ENCODE measurements at regions of chr22 and their contacts with region 1.

Region 1: DNA sequence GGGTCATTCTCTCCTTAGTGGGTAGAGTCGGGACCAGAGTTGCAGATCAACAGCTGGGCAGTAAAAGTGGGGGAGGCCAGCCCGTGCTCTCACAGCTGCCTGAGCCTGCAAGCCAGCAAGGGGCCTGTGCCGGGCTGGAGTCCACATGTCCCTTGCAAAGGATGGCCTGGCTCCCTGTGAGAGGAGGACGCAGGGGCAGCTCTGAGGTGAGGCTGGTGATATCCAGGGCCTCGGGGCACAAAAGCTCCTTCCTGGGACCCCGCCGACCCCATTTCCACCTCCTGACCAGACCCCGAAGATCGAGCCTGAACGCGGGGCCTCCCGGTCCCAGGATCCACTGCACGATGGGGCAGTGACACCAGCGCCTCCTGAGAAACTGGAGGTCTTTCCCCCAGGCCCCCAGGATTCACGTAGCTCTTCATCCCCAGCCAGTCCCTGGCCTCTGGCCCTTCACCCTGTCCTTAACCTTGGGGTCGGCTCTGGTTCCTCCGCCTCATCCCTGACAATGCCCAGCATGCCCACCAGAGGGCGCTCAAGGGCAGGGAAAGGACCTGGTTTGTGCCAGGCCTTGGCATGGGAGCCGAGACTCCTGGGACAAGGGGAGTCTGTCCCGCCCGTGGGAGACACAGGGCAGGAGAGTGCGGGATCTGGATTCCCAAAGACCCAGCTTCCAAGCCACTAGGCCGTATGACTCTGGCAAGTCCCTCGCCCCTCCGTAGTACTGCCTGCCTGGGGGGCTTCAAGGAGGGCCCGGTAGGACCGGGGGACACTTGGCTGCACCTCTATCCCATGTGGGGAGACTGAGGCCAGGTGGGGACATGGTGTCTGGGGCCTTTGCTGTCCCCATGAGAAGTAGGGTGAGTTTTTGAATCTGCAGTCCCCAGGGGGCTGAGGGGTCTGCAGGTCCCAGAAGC is 17.8 kb upstream of the WNT7B start:
- DNase-seq: peak; percentile 55
- H3K4me3 ChIP-seq: no peak overlapping the region
- H3K27ac ChIP-seq: no peak overlapping the region
- H3K4me1 ChIP-seq: peaks cover 31% of the 10 kb centered on the region
- H3K27me3 ChIP-seq: no peaks in the 10 kb centered on the region
- CTCF ChIP-seq: peak; percentile 91 to 95
- POLR2A ChIP-seq: no peak

Region 2: DNA sequence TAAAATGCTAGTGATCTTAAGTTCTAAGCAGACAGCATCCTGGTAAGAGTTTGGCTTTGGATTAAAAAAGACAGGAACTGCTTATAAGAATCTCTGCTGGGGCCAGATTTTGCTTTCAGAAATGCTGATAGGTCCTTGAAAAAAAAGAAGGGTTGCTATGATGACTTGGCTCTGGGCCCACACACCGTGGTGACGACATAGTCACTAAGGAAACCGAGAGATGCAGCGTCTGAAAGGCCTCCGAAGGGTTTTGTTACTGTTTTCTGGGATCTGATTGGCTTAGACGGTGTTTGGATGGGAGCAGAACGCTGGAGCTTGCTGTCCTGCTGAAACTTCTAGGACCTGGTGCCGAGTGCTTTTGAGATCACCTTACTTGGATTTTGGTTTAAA is 676.6 kb before region 1 on chr22:
- CTCF ChIA-PET with region 1: no interaction called
- POLR2A ChIA-PET with region 1: no interaction called
- dilution Hi-C with region 1: no loop called
- intact Hi-C with region 1: loop called (anchors 5 kb)
- DNase-seq: peak; percentile 97
- H3K4me3 ChIP-seq: peak overlapping the region in 1 of 3 experiments; percentile 44
- H3K27ac ChIP-seq: peak overlapping the region; percentile 99
- H3K4me1 ChIP-seq: peaks cover 33% of the 10 kb centered on the region
- H3K27me3 ChIP-seq: no peaks in the 10 kb centered on the region
- CTCF ChIP-seq: no peak
- POLR2A ChIP-seq: no peak

Region 3: DNA sequence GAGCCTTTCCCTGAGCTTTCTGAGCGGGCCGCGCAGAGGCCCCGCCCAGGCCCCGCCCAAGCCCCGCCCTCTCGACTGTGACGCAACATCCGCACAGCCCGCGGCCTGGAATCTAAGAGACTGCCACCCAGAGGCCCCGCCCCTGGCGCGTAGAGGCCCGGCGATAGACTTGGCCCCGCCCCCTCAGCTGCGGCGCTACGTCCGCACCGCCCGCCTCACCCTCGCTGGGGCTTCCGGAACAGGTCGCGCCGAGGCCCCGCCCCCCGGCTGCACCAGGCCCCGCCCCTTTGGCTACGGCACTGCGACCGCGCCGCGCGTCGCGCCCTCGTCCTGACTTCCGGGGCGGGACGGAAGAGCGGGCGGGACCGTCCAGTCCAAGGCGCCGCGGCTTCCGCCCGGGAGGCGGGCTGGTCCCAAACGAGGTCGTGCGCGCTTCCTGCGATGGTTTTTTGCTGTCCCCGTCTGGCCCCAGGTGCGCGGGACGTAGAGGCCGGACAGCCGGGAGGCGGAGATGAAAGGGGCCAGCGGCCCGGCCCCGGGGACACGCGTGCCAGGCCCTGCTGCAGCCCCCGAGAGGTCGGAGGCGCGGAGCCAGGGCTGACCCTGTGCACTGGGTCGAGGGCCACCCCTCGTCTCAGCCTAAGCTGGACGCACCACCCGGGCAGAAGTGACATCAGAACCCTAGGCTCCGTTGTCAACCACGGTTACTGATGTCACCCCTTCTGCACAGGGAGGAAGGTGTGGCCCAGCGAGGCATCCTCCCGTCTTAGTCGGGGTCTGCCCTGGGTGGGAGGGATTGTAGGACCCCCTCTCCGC is 41.2 kb after region 1 on chr22:
- CTCF ChIA-PET with region 1: interaction called, 12 read pairs
- POLR2A ChIA-PET with region 1: no interaction called
- dilution Hi-C with region 1: no loop called
- intact Hi-C with region 1: loop called (anchors 1 kb)
- DNase-seq: peak; percentile 100
- H3K4me3 ChIP-seq: peak overlapping the region; percentile 18 to 68 (median 26)
- H3K27ac ChIP-seq: peak overlapping the region; percentile 89
- H3K4me1 ChIP-seq: peaks cover 17% of the 10 kb centered on the region
- H3K27me3 ChIP-seq: no peaks in the 10 kb centered on the region
- CTCF ChIP-seq: no peak
- POLR2A ChIP-seq: peak; percentile 57

Region 4: DNA sequence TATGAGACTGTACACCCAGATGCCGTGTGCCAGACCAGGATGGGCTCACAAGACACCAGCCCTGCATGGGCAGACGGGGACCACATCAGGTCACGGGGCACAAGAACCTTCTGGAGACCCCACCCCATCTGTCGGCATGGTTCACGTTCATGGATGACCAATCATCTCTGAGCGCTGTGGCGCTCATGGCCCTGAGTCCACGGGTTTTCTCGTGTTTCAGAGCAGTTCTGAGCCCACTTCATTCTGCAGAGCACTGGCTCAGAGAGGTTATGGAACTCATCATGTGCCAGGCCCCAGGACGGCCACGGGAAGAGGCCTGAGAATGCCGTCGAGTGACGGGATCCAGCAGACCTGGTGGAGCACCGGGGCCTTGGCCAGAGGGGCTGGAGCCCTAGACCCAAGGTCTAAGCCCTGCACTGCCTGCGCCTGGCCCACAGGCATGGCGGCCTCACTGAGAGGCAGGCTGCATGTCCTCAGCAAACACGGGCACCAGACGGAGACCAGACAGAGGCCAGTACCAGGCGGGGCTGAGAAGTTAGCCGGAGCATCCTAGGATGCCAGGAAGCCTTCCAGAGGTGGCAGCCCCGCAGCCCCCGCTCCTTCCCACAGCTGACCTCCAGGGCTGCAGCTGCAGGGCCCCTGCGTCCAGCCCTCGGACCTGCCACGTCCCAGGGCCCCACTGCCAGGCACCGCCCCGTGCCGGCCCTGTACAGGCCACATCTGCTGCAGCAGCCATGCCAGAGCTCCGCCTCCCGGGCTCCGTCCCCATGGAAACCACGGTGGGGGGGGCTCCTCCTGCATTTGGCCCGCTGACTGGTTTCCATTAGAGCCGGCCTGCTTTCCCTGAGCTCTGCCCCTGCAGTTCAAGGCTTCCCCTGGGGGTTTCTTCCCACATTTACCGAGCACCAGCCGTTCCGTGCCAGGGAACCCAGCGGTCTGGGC is 92.9 kb after region 1 on chr22:
- CTCF ChIA-PET with region 1: interaction called, 13 read pairs
- POLR2A ChIA-PET with region 1: interaction called, 4 read pairs
- dilution Hi-C with region 1: no loop called
- intact Hi-C with region 1: loop called (anchors 1 kb)
- DNase-seq: peak; percentile 85
- H3K4me3 ChIP-seq: no peak overlapping the region
- H3K27ac ChIP-seq: peak overlapping the region; percentile 85
- H3K4me1 ChIP-seq: peaks cover 69% of the 10 kb centered on the region
- H3K27me3 ChIP-seq: no peaks in the 10 kb centered on the region
- CTCF ChIP-seq: no peak
- POLR2A ChIP-seq: no peak

Region 5: DNA sequence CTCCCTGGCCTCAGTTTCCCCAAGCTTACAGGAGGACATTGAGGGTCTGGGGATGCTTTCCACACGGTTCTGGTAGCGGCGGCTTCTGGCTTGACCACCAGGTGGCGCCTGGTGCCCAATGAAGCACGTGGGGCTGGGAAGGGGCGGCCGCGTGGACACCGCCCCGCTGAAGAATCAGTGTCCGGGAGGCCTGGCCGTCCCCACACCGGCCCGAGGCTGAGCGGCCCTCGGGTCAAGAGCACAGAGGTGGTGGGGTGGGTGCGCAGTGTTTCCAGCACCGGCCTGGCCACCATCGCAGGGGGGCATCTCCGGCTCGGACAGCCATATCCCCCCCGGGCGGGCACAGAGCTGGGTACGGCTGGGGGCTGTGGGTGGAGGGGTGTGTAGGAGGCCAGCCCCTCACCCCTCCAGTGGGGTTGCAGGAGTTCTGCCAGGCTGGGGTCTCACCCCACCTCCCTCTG is 127.8 kb after region 1 on chr22:
- CTCF ChIA-PET with region 1: interaction called, 139 read pairs
- POLR2A ChIA-PET with region 1: interaction called, 7 read pairs
- dilution Hi-C with region 1: no loop called
- intact Hi-C with region 1: no loop called
- DNase-seq: peak; percentile 43
- H3K4me3 ChIP-seq: no peak overlapping the region
- H3K27ac ChIP-seq: no peak overlapping the region
- H3K4me1 ChIP-seq: no peaks in the 10 kb centered on the region
- H3K27me3 ChIP-seq: no peaks in the 10 kb centered on the region
- CTCF ChIP-seq: peak; percentile 93 to 95
- POLR2A ChIP-seq: no peak

Region 6: GRCh38 chr22:46193898-46194310 is 199.2 kb after region 1 on chr22:
- CTCF ChIA-PET with region 1: no interaction called
- POLR2A ChIA-PET with region 1: no interaction called
- dilution Hi-C with region 1: no loop called
- intact Hi-C with region 1: no loop called
- DNase-seq: no peak
- H3K4me3 ChIP-seq: no peak overlapping the region
- H3K27ac ChIP-seq: no peak overlapping the region
- H3K4me1 ChIP-seq: no peaks in the 10 kb centered on the region
- H3K27me3 ChIP-seq: no peaks in the 10 kb centered on the region
- CTCF ChIP-seq: no peak
- POLR2A ChIP-seq: no peak

Region 7: GRCh38 chr22:46296257-46297150 is 301.8 kb after region 1 on chr22 and contains the start of gene GTSE1:
- CTCF ChIA-PET with region 1: no interaction called
- POLR2A ChIA-PET with region 1: no interaction called
- dilution Hi-C with region 1: no loop called
- intact Hi-C with region 1: loop called (anchors 5 kb)
- DNase-seq: peak; percentile 97
- H3K4me3 ChIP-seq: peak within 1 kb of the TSS; percentile 42 to 75 (median 73)
- H3K27ac ChIP-seq: peak within 1 kb of the TSS; percentile 65
- H3K4me1 ChIP-seq: peaks cover 14% of the 10 kb centered on the region
- H3K27me3 ChIP-seq: no peaks in the 10 kb centered on the region
- CTCF ChIP-seq: no peak
- POLR2A ChIP-seq: peak; percentile 71
- total RNA-seq, gene GTSE1: 57.0 and 57.2 TPM in 2 replicates

Measured in endothelial cell of umbilical vein (primary cell).